CD8-positive, alpha-beta T cell (primary cell): ENCODE measurements at regions of chr18 and their contacts with region 1.

Region 1: GRCh38 chr18:13726232-13726971 is at the starts of genes FAM210A and RNMT:
- DNase-seq: peak; percentile 82 to 98 (median 94)
- ATAC-seq: peak; percentile 91
- H3K4me3 ChIP-seq: peak within 1 kb of the TSS; percentile 74 to 87
- H3K4me3 Mint-ChIP-seq: peak within 1 kb of the TSS; percentile 80
- H3K27ac ChIP-seq: peak within 1 kb of the TSS; percentile 90 to 93
- H3K27ac Mint-ChIP-seq: peak within 1 kb of the TSS; percentile 99
- H3K4me1 ChIP-seq: peaks cover 41% of the 10 kb centered on the region
- H3K4me1 Mint-ChIP-seq: peaks cover 64% of the 10 kb centered on the region
- H3K27me3 ChIP-seq: no peaks in the 10 kb centered on the region
- H3K27me3 Mint-ChIP-seq: no peaks in the 10 kb centered on the region
- CTCF ChIP-seq: no peak
- total RNA-seq, gene FAM210A: 8.3 to 9.1 TPM
- total RNA-seq, gene RNMT: 159 to 160 TPM

Region 2: GRCh38 chr18:12376718-12377555 is 1349.5 kb before region 1 on chr18 and contains the start of gene AFG3L2:
- CTCF ChIA-PET with region 1: no interaction called
- POLR2A ChIA-PET with region 1: interaction called, 3 read pairs
- intact Hi-C with region 1: loop called (anchors 2 to 5 kb)
- DNase-seq: peak; percentile 100
- ATAC-seq: peak; percentile 88
- H3K4me3 ChIP-seq: peak within 1 kb of the TSS; percentile 81 to 92
- H3K4me3 Mint-ChIP-seq: peak within 1 kb of the TSS; percentile 88
- H3K27ac ChIP-seq: peak within 1 kb of the TSS; percentile 87 to 92
- H3K27ac Mint-ChIP-seq: peak within 1 kb of the TSS; percentile 93
- H3K4me1 ChIP-seq: peaks cover 40% of the 10 kb centered on the region
- H3K4me1 Mint-ChIP-seq: peaks cover 48% of the 10 kb centered on the region
- H3K27me3 ChIP-seq: no peaks in the 10 kb centered on the region
- H3K27me3 Mint-ChIP-seq: no peaks in the 10 kb centered on the region
- CTCF ChIP-seq: no peak
- total RNA-seq, gene AFG3L2: 58.4 to 59.0 TPM

Region 3: GRCh38 chr18:12883684-12884405 is 842.6 kb before region 1 on chr18 and contains the start of gene PTPN2:
- CTCF ChIA-PET with region 1: no interaction called
- POLR2A ChIA-PET with region 1: no interaction called
- intact Hi-C with region 1: loop called (anchors 2 to 5 kb)
- DNase-seq: peak; percentile 78 to 98 (median 91)
- ATAC-seq: peak; percentile 86
- H3K4me3 ChIP-seq: peak within 1 kb of the TSS; percentile 77 to 95
- H3K4me3 Mint-ChIP-seq: peak within 1 kb of the TSS; percentile 88
- H3K27ac ChIP-seq: peak within 1 kb of the TSS; percentile 99 to 100
- H3K27ac Mint-ChIP-seq: peak within 1 kb of the TSS; percentile 94
- H3K4me1 ChIP-seq: peaks cover 49% of the 10 kb centered on the region
- H3K4me1 Mint-ChIP-seq: peaks cover 58% of the 10 kb centered on the region
- H3K27me3 ChIP-seq: no peaks in the 10 kb centered on the region
- H3K27me3 Mint-ChIP-seq: no peaks in the 10 kb centered on the region
- CTCF ChIP-seq: no peak
- total RNA-seq, gene PTPN2: 61.7 to 62.8 TPM

Region 4: GRCh38 chr18:13137670-13138419 is 588.6 kb before region 1 on chr18:
- CTCF ChIA-PET with region 1: no interaction called
- POLR2A ChIA-PET with region 1: interaction called, 4 read pairs
- intact Hi-C with region 1: loop called (anchors 2 kb)
- DNase-seq: peak; percentile 28 to 90 (median 61)
- ATAC-seq: peak; percentile 73
- H3K4me3 ChIP-seq: peak overlapping the region; percentile 84 to 98
- H3K4me3 Mint-ChIP-seq: peak overlapping the region; percentile 94
- H3K27ac ChIP-seq: peak overlapping the region; percentile 87 to 90
- H3K27ac Mint-ChIP-seq: peak overlapping the region; percentile 96
- H3K4me1 ChIP-seq: peaks cover 20% of the 10 kb centered on the region
- H3K4me1 Mint-ChIP-seq: peaks cover 28% of the 10 kb centered on the region
- H3K27me3 ChIP-seq: no peaks in the 10 kb centered on the region
- H3K27me3 Mint-ChIP-seq: no peaks in the 10 kb centered on the region
- CTCF ChIP-seq: no peak

Region 5: GRCh38 chr18:13464432-13465123 is 261.8 kb before region 1 on chr18:
- CTCF ChIA-PET with region 1: interaction called, 3 read pairs
- POLR2A ChIA-PET with region 1: no interaction called
- intact Hi-C with region 1: loop called in 1 of 2 experiments (anchors 10 kb)
- DNase-seq: peak; percentile 33 to 86 (median 76)
- ATAC-seq: peak; percentile 92
- H3K4me3 ChIP-seq: peak overlapping the region; percentile 60 to 73
- H3K4me3 Mint-ChIP-seq: peak overlapping the region; percentile 91
- H3K27ac ChIP-seq: peak overlapping the region; percentile 66 to 78
- H3K27ac Mint-ChIP-seq: peak overlapping the region; percentile 97
- H3K4me1 ChIP-seq: peaks cover 44% of the 10 kb centered on the region
- H3K4me1 Mint-ChIP-seq: peaks cover 71% of the 10 kb centered on the region
- H3K27me3 ChIP-seq: no peaks in the 10 kb centered on the region
- H3K27me3 Mint-ChIP-seq: no peaks in the 10 kb centered on the region
- CTCF ChIP-seq: no peak

Region 6: GRCh38 chr18:13611601-13612195 is 114.7 kb before region 1 on chr18:
- CTCF ChIA-PET with region 1: interaction called, 3 read pairs
- POLR2A ChIA-PET with region 1: interaction called, 3 read pairs
- intact Hi-C with region 1: loop called (anchors 2 to 5 kb)
- DNase-seq: peak in 2 of 9 experiments; percentile 26 to 36
- ATAC-seq: no peak
- H3K4me3 ChIP-seq: peak overlapping the region; percentile 36 to 55
- H3K4me3 Mint-ChIP-seq: peak overlapping the region; percentile 82
- H3K27ac ChIP-seq: peak overlapping the region; percentile 33 to 53
- H3K27ac Mint-ChIP-seq: peak overlapping the region; percentile 98
- H3K4me1 ChIP-seq: peaks cover 72% of the 10 kb centered on the region
- H3K4me1 Mint-ChIP-seq: peaks cover 83% of the 10 kb centered on the region
- H3K27me3 ChIP-seq: no peaks in the 10 kb centered on the region
- H3K27me3 Mint-ChIP-seq: no peaks in the 10 kb centered on the region
- CTCF ChIP-seq: no peak